Prostate gland (tissue), 2 donors: ENCODE measurements at regions of chr18 and their contacts with region 1.

Region 1: DNA sequence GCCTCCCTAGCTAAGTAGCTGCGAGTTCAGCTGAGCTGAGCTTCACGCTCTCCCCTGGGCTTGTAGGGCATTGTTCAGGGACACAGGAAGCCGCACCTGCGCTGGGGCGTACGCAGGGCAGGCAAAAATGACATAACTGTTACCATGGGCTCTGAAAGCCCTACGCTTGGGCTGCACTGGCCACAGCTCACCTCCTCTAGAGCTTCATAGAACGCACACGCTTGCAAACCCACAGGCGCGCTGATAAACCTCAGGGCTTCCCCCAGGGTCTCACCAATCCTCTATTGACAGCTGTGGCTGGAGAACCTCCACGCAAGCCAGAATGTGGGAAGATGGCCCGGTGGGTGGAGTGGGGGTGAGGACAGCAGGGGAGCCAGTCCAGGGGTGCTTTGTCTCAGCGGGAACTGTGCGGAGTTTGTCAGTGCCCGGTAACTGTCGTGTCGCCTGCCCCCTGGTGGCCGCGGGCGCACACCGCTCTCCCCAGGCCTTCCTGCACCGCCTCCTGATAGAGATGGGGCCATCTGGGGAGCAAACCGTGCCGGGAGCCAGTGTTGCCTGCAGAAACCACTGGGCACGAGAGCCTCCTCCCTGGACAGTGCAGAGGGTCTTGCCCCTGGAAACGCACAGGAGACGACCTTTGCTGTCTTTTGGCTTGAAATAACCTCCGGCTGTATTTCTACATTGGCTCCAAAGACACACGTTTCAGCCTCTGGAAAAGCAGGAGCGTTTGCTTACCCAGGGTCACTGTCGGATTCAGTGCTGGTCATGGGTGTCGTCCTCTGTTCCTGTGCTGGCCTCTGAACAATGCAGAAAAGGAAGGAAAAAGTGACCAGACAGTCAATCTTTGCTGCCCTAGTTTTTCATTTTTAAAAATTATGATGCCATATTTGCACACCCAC is 17.0 kb upstream of the CIDEA start:
- DNase-seq: peak; percentile 47
- H3K4me3 ChIP-seq: no peak overlapping the region
- H3K27ac ChIP-seq: no peak overlapping the region
- H3K4me1 ChIP-seq: no peaks in the 10 kb centered on the region
- H3K27me3 ChIP-seq: peaks cover 3% of the 10 kb centered on the region
- CTCF ChIP-seq: peak; percentile 68 to 80 (median 75)
- POLR2A ChIP-seq: no peak

Region 2: GRCh38 chr18:10604182-10604581 is 1633.0 kb before region 1 on chr18:
- intact Hi-C with region 1: loop called (anchors 10 kb)
- DNase-seq: no peak
- H3K4me3 ChIP-seq: no peak overlapping the region
- H3K27ac ChIP-seq: no peak overlapping the region
- H3K4me1 ChIP-seq: no peaks in the 10 kb centered on the region
- H3K27me3 ChIP-seq: no peaks in the 10 kb centered on the region
- CTCF ChIP-seq: no peak
- POLR2A ChIP-seq: no peak

Region 3: DNA sequence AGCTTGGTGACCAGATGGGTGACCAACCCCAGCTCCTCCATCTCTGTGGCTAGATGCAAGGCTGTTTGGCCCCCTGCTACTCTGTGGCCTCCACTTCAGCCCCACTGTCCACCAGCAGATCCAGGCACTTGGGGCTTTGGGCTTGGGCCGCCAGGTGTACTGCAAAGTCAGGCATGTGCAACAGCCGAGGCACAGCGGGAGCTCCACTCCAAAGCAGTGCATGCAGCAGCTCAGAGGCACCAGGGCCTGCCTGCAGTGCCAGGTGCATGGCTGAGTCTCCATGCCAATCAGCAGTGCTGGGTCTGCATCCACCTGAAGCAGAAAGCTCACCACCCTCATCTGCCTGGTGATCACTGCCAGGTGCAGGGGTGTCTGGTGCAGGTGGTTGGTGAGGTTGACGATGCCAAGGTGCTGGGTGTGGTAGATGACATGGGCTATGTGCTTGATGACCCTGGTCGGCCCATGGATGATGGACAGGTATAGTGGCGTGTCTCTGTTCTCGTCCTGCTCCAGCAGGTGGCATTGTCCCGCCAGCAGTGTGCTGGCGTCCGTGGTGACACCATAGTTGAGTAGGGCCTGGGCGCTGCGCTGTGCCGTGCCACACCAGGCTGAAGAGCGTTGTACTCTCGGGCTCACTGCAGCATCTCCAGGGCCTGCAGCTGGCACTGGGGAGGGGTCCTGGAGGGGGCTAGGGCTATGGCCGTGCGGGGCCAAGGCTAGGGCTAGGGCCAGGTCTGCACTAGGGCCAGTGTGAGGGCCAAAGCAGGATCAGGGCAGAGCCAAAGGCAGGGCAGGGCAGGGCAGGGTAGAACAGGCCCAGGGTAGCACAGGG is 144.6 kb before region 1 on chr18:
- intact Hi-C with region 1: loop called (anchors 10 kb)
- DNase-seq: no peak
- H3K4me3 ChIP-seq: no peak overlapping the region
- H3K27ac ChIP-seq: no peak overlapping the region
- H3K4me1 ChIP-seq: no peaks in the 10 kb centered on the region
- H3K27me3 ChIP-seq: peaks cover 1% of the 10 kb centered on the region
- CTCF ChIP-seq: peak in 3 of 4 experiments; percentile 13 to 43 (median 37)
- POLR2A ChIP-seq: no peak

Region 4: DNA sequence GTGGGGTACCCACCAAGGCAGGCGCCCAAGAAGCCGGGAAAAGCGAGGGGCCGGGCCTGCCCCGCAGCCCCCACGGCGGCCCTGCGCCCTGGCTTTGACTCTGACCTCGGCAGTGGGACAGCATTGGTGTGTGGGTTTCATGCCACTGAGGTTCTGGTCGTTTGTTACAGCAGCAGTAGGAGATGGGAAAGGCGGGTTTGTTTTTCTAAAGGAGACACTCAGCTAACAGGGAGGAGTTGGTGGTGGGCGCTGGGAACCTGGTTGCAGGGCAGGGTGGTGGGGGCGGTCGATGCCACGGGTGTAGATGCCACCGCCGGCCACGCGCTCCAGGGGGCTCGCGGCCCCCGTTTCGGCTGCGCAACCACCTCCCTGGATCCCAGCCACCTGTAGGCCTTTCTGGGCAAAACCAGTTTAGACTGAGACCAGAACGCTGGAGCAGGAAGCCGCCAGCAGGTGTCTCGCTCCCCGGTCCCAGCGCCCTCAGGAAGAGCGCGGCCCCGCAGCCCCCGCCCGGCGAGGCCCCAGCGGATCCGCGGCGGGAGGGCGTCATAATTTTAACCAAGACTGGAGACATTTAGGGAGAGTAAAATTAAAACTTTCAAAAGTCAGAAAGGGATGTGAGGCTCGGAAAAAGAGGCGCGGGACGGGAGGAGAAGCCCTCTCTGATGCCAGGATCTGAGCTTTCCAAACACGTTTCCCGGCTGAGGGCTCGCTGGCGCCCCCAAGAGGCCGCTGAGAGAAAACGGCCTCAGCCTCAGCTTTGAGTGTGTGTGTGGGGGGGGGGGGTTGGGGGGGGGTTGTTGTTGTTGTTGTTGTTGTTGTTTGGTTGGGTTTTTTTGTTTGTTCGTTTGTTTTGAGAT is 34.4 kb after region 1 on chr18:
- intact Hi-C with region 1: no loop called
- DNase-seq: peak; percentile 65
- H3K4me3 ChIP-seq: peak overlapping the region; percentile 22 to 31
- H3K27ac ChIP-seq: peak overlapping the region; percentile 68 to 73
- H3K4me1 ChIP-seq: no peaks in the 10 kb centered on the region
- H3K27me3 ChIP-seq: no peaks in the 10 kb centered on the region
- CTCF ChIP-seq: peak; percentile 20 to 88 (median 80)
- POLR2A ChIP-seq: no peak